ENCODE measurements at regions of chrX and their contacts with region 1.

Region 1: DNA sequence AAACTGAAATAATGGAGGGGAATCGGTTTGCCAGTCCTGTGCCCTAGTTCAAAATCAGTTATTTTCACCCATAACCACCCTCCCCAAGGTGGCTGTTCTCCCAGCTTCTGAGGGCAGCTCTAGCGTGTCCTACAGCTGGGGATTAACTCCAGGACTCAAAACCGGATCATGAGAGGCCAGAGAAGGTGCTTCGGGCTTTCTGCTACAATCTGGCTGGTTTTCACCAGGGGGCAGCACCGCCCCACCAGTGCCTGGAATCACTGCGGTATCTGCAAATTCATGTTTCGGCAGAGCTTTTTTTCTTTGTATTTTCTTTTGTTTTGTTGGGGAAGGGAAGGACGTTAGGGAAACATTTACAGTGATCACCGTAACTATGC is 28.4 kb downstream of the PDHA1 start:
- DNase-seq: peak; percentile 50 to 57
- ATAC-seq: peak in 7 of 8 donors; percentile 66 to 84 (median 76)
- H3K4me3 ChIP-seq: peak overlapping the region in 8 of 10 donors; percentile 13 to 56 (median 48)
- H3K27ac ChIP-seq: no peak overlapping the region
- H3K4me1 ChIP-seq: peaks cover 0 to 5% (median 0%) of the 10 kb centered on the region in 9 donors
- H3K27me3 ChIP-seq: peaks cover 0 to 3% (median 0%) of the 10 kb centered on the region in 7 donors
- CTCF ChIP-seq: peak; percentile 24 to 75 (median 64)

Region 2: DNA sequence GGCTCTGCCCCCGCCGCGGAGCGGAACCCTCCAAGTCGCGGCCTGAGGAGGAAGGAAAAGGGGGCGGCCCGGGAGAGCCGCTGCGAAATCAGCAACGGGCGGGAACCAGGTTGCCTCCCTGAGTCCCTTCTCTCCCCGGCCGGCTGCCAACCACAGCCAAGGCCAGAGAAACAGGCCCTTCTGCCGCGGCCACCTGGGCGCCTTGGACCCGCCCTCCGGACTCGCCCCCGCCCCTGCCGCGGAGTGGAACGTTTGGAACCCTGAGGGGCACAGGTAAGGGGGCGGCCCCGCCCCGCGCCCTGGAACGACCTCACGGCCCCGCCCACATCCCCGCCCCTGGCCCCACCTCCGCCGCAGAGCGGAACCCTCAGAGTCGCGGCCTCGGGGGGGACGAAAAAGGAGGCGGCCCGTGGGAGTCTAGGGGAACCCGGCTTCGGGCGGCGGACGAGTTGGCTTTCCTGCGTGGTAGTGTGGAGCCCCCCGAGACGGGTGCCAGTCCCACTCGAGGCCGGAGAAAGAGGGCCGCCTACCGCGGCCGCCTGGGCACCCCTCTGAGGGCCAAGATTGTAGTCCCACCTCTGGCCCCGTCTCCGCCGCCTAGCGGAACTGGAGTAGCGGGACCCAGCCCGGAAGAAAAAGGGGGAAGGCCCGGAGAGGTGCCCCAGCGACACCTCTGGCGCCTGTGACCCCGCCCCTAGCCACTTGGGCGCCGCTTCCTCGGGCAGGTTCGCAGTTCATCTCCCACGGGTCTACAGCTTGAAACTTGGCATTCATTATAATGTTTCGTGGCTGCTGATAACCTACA is 387.6 kb before region 1 on chrX:
- intact Hi-C with region 1: no loop called
- DNase-seq: peak; percentile 76 to 82
- ATAC-seq: peak; percentile 93 to 98 (median 96)
- H3K4me3 ChIP-seq: peak overlapping the region; percentile 56 to 94 (median 76)
- H3K27ac ChIP-seq: peak overlapping the region; percentile 75 to 97 (median 92)
- H3K4me1 ChIP-seq: peaks cover 0 to 22% (median 4%) of the 10 kb centered on the region in 9 donors
- H3K27me3 ChIP-seq: peaks cover 0 to 27% (median 0%) of the 10 kb centered on the region in 7 donors
- CTCF ChIP-seq: peak; percentile 25 to 63 (median 51)

Region 3: GRCh38 chrX:19256986-19257385 is 115.2 kb before region 1 on chrX:
- intact Hi-C with region 1: no loop called
- DNase-seq: no peak
- ATAC-seq: no peak
- H3K4me3 ChIP-seq: no peak overlapping the region
- H3K27ac ChIP-seq: no peak overlapping the region
- H3K4me1 ChIP-seq: no peaks in the 10 kb centered on the region
- H3K27me3 ChIP-seq: peaks cover 0 to 4% (median 0%) of the 10 kb centered on the region in 7 donors
- CTCF ChIP-seq: no peak

Region 4: GRCh38 chrX:19535476-19535875 is 163.3 kb after region 1 on chrX:
- intact Hi-C with region 1: loop called in 3 of 10 experiments (anchors 1 to 10 kb)
- DNase-seq: no peak
- ATAC-seq: peak in 1 of 8 donors; percentile 51
- H3K4me3 ChIP-seq: no peak overlapping the region
- H3K27ac ChIP-seq: no peak overlapping the region
- H3K4me1 ChIP-seq: no peaks in the 10 kb centered on the region
- H3K27me3 ChIP-seq: peaks cover 0 to 7% (median 0%) of the 10 kb centered on the region in 7 donors
- CTCF ChIP-seq: peak in 5 of 9 donors; percentile 21 to 43 (median 26)

Measured in heart right ventricle (tissue), 16 donors.